ENCODE measurements at regions of chr11 and their contacts with region 1.

Region 1: DNA sequence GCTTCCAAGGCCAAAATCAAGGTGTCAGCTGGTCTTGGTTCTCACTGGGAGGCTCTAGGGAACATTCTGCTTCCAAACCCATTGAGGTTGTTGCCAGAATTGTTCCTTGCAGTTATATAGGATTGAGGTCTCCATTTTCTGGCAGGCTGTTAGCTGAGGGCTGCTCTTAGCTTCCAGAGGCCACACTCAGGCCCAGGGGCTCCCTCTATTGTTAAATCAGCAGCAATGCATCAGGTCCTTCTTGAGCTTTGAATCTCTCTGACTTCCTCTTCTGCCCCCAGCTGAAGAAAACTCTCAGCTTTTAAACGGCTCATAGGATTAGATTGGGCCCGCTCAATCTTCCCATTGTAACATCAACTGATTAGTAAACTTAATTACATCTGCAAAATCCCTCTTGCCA is 39.3 kb upstream of the BSX start:
- DNase-seq: no peak
- ATAC-seq: peak; percentile 95
- H3K4me3 ChIP-seq: no peak overlapping the region
- H3K27ac ChIP-seq: no peak overlapping the region
- H3K4me1 ChIP-seq: peaks cover 5% of the 10 kb centered on the region; the same call in 1 of the 2 replicates
- H3K27me3 ChIP-seq: no peaks in the 10 kb centered on the region
- CTCF ChIP-seq: peak; percentile 68 to 78 (median 73)
- EP300 ChIP-seq: no peak
- POLR2A ChIP-seq: no peak
- RAD21 ChIP-seq: peak; percentile 81

Region 2: DNA sequence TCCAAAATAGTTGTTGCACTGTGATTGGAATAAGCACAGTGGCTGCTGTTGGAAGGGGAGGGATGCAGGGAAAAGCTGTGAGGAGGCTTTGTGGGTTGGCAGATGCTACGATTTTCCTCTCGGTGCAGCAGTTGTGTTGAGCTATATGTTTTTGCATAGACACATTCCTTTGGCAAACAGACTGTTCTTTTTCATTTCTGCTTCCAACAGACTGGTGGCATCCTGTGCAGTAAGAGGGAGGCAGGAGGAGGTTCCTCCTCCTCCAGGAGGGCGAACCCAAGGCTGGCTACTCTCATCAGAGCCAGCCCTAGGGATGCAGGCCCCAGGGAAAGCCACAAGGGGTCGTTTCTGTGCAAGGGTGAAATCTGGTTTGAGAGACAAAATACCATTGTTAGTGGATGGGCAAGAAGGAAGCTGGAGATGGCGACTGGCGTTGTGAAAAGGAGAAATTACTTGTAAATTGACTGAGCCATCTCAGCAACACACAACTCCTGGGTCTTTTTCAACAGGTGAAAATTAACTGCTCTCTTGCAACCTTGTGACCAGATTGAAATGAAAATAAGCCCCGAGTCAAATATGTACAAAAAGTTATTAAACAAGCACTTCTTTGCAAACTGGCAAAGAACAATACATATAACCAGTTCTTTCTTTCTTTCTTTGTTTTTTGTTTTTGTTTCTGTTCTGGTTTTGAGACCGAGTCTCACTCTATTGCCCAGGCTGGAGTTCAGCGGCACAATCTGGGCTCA is 392.0 kb before region 1 on chr11:
- CTCF ChIA-PET with region 1: interaction called, 4 read pairs
- POLR2A ChIA-PET with region 1: no interaction called
- RAD21 ChIA-PET with region 1: no interaction called
- SMC1A ChIA-PET with region 1: interaction called, 3 read pairs
- in situ Hi-C with region 1: no loop called
- intact Hi-C with region 1: loop called (anchors 10 kb)
- DNase-seq: no peak
- ATAC-seq: peak; percentile 95
- H3K4me3 ChIP-seq: no peak overlapping the region
- H3K27ac ChIP-seq: no peak overlapping the region
- H3K4me1 ChIP-seq: no peaks in the 10 kb centered on the region
- H3K27me3 ChIP-seq: no peaks in the 10 kb centered on the region; a peak in 2 of 4 replicates
- CTCF ChIP-seq: peak; percentile 76 to 81 (median 80)
- EP300 ChIP-seq: no peak
- POLR2A ChIP-seq: no peak
- RAD21 ChIP-seq: peak; percentile 84

Region 3: DNA sequence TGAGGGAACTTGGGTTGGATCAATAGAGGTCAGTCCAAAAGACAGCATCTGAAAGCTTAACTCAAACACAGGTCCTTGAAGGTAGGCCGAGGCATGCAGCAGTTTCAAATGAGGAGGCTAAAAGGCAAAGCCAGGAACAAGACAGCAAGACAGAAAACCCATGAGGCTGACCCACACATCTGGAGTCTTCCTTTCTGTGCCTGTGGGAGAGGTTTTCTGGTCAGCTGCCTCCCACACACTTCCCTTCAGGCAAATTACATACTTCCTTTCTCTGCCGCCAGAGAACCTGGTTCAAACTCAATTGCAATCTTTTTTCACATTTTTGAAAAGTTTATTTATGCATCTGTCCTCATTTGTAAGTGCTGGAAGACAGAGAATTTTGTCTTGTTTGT is 212.5 kb before region 1 on chr11:
- CTCF ChIA-PET with region 1: interaction called, 8 read pairs
- POLR2A ChIA-PET with region 1: no interaction called
- RAD21 ChIA-PET with region 1: interaction called, 11 read pairs
- SMC1A ChIA-PET with region 1: interaction called, 11 read pairs
- in situ Hi-C with region 1: no loop called
- intact Hi-C with region 1: no loop called
- DNase-seq: peak; percentile 66
- ATAC-seq: peak; percentile 81
- H3K4me3 ChIP-seq: no peak overlapping the region
- H3K27ac ChIP-seq: peak overlapping the region; percentile 47; the same call in 1 of the 2 replicates
- H3K4me1 ChIP-seq: peaks cover 18% of the 10 kb centered on the region
- H3K27me3 ChIP-seq: no peaks in the 10 kb centered on the region
- CTCF ChIP-seq: no peak
- EP300 ChIP-seq: no peak
- POLR2A ChIP-seq: no peak
- RAD21 ChIP-seq: no peak

Region 4: DNA sequence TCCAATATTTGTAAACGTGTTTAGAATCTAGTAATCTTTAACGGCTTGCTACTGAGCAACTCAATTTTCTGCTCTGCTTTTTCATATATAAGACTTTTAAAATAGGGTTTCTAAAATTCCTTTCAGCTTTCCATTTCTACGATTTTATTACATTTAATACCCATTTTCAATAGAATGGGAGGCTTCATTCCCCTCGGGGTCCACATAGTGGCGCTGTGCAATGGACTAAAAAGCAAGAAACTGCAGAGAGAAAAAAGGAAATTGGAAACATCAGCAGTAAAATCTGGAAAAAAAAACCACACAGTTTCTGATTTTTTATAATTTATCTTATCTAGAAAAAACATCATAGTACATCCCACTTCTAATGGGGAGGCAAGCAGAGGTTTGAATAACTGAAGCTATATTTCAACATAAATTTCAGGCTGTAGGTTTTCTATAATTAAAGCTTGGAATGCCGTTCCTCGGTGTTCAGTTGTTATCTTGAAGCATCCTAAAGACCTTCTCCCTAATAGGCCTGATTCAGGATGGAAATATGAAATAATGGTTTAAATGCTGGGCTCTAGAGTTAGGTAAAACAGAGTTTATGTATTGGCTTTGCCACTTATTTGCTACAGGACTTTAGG is 157.2 kb before region 1 on chr11:
- CTCF ChIA-PET with region 1: interaction called, 869 read pairs
- POLR2A ChIA-PET with region 1: interaction called, 9 read pairs
- RAD21 ChIA-PET with region 1: interaction called, 213 read pairs
- SMC1A ChIA-PET with region 1: interaction called, 258 read pairs
- in situ Hi-C with region 1: loop called (anchors 5 kb)
- intact Hi-C with region 1: loop called (anchors 1 kb)
- DNase-seq: no peak
- ATAC-seq: peak; percentile 68
- H3K4me3 ChIP-seq: no peak overlapping the region
- H3K27ac ChIP-seq: no peak overlapping the region
- H3K4me1 ChIP-seq: peaks cover 3% of the 10 kb centered on the region
- H3K27me3 ChIP-seq: peaks cover 0 to 3% of the 10 kb centered on the region in 2 experiments; a peak in 1 of 4 replicates
- CTCF ChIP-seq: peak; percentile 82 to 83 (median 82)
- EP300 ChIP-seq: no peak
- POLR2A ChIP-seq: no peak
- RAD21 ChIP-seq: peak; percentile 92

Region 5: DNA sequence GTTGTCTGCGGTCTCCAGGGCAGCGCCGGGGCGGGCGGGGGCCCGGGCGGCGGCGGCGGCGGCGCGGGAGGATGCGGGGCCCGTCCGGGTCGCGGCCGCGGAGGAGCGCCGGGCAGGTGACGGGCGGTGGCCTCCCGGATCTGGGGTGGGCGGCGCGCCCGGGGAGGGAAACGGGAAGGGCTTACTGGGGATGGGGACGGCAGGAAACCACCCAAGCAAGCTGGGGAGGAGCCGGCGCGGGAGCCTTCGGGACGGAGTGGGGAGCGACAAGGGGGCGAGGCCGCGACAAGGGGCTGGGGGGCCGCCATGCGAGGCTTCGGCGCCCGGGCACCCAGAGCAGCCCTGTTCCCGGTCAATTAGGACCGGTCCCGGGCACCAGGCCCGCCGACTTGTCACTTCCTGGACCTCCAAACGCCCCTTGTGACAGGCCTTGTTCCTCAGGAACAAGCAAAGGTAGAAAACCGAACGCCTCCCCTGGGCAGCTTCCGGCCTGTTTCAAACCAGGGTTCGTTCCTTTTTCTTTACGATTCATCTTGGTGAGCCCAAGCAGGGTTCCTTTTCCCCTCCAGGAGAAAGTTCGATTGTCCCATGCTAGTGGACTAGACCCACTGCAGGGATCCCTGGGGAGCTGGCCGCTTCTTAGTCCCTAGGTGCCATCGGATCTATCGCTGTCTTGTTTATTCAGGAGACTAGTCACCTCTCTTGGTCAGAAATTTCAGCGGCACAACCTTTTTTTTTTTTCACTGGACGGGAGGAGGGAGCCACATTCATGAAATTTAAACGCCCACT is 137.9 kb before region 1 on chr11:
- CTCF ChIA-PET with region 1: interaction called, 869 read pairs
- POLR2A ChIA-PET with region 1: interaction called, 3 read pairs
- RAD21 ChIA-PET with region 1: interaction called, 10 read pairs
- SMC1A ChIA-PET with region 1: interaction called, 7 read pairs
- in situ Hi-C with region 1: no loop called
- intact Hi-C with region 1: no loop called
- DNase-seq: no peak
- ATAC-seq: peak; percentile 67
- H3K4me3 ChIP-seq: peak overlapping the region; percentile 76
- H3K27ac ChIP-seq: peak overlapping the region; percentile 71
- H3K4me1 ChIP-seq: no peaks in the 10 kb centered on the region; the same call in 1 of the 2 replicates
- H3K27me3 ChIP-seq: no peaks in the 10 kb centered on the region
- CTCF ChIP-seq: no peak
- EP300 ChIP-seq: 0 out of 4 replicates have a peak, but pooled peaks of 1 of the 2 experiments have one; percentile 17
- POLR2A ChIP-seq: peak; percentile 53; the same call in 1 of the 2 replicates
- RAD21 ChIP-seq: no peak

Region 6: GRCh38 chr11:122920579-122920978 is 100.4 kb before region 1 on chr11:
- CTCF ChIA-PET with region 1: interaction called, 4 read pairs
- POLR2A ChIA-PET with region 1: no interaction called
- RAD21 ChIA-PET with region 1: interaction called, 4 read pairs
- SMC1A ChIA-PET with region 1: interaction called, 12 read pairs
- in situ Hi-C with region 1: no loop called
- intact Hi-C with region 1: no loop called
- DNase-seq: no peak
- ATAC-seq: no peak
- H3K4me3 ChIP-seq: no peak overlapping the region
- H3K27ac ChIP-seq: no peak overlapping the region
- H3K4me1 ChIP-seq: no peaks in the 10 kb centered on the region
- H3K27me3 ChIP-seq: no peaks in the 10 kb centered on the region
- CTCF ChIP-seq: no peak
- EP300 ChIP-seq: no peak
- POLR2A ChIP-seq: no peak
- RAD21 ChIP-seq: no peak

Region 7: DNA sequence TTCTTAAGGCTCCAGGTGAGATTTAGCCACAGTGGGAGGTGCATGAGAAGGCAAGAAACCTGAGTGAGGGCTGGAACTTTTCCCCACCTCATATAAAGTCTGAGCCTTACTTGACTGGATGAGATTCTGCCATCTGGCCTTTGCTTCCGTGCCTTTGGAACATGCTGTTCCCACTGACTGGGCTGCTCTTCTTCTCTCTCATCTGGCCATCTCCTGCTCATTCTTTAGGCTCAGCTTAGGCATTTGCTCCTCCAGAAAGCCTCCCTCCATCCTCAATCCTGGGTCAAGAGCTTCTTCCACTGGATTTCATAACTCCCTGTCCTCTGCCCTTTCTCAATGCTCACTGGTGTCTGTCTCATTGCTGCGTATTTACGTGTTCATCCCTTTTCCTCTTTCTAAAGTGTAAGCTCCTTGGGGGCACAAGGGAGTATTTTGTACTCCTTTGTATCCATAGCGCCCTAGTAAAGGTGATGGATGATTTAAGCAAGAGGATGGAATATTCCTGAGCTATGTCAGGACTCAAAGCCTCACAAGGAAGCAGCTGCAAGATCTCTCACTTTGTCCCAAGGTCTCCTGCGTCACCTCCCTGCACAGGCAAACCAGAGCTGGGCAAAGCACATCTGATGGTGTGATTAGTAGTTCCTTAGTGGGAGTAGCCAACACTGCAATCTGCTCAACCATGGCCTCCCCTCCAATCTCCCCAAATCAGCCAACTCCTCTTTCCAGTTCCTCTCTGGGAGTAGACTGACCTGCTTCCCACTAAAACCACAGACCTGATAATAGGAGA is 25.7 kb after region 1 on chr11:
- CTCF ChIA-PET with region 1: interaction called, 14 read pairs
- POLR2A ChIA-PET with region 1: no interaction called
- RAD21 ChIA-PET with region 1: interaction called, 3 read pairs
- SMC1A ChIA-PET with region 1: interaction called, 119 read pairs
- in situ Hi-C with region 1: no loop called
- intact Hi-C with region 1: no loop called
- DNase-seq: no peak
- ATAC-seq: 0 out of 3 replicates have a peak, but pooled peaks have one; percentile 16
- H3K4me3 ChIP-seq: no peak overlapping the region
- H3K27ac ChIP-seq: no peak overlapping the region
- H3K4me1 ChIP-seq: no peaks in the 10 kb centered on the region
- H3K27me3 ChIP-seq: no peaks in the 10 kb centered on the region
- CTCF ChIP-seq: no peak
- EP300 ChIP-seq: no peak
- POLR2A ChIP-seq: no peak
- RAD21 ChIP-seq: no peak

Region 8: DNA sequence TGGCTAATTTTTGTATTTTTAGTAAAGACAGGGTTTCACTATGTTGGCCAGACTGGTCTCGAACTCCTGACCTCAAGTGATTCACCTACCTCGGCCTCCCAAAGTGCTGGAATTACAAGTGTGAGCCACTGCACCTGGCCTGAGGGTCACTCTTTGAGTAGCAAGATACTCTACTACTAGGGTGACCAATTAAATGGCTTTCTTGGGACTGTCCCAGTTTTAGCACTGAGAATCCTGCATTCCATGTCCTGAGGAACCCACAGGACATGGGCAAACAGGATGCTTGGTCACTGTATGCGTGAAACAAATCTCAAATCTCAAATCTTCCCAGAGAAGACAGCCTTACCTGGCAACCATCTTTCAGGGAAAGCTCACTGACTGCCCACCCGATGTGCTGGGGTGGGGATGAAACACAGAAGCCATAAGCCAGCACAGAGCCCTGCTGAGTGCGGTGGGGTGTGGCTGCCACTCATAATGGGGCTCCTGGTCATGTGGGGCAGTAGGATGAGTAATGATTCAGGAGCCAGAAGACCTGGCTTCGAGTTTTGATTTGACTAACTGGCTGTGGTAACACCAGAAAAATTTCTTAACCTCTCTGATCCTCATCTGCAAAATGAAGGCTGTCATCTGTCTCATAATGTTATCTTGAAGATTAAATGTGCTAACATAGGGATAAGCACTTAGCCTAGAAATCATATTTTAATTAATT is 162.6 kb after region 1 on chr11:
- CTCF ChIA-PET with region 1: no interaction called
- POLR2A ChIA-PET with region 1: no interaction called
- RAD21 ChIA-PET with region 1: no interaction called
- SMC1A ChIA-PET with region 1: no interaction called
- in situ Hi-C with region 1: no loop called
- intact Hi-C with region 1: no loop called
- DNase-seq: no peak
- ATAC-seq: peak; percentile 82
- H3K4me3 ChIP-seq: no peak overlapping the region
- H3K27ac ChIP-seq: no peak overlapping the region
- H3K4me1 ChIP-seq: no peaks in the 10 kb centered on the region
- H3K27me3 ChIP-seq: peaks cover 8 to 10% of the 10 kb centered on the region in 2 experiments; a peak in 3 of 4 replicates
- CTCF ChIP-seq: no peak
- EP300 ChIP-seq: no peak
- POLR2A ChIP-seq: no peak
- RAD21 ChIP-seq: no peak

Measured in GM12878 (cell line).